Activated CD4-positive, alpha-beta memory T cell treated with anti-CD3 and anti-CD28 coated beads for 36 hours (primary cell): ENCODE measurements at regions of chr1 and their contacts with region 1.

Region 1: DNA sequence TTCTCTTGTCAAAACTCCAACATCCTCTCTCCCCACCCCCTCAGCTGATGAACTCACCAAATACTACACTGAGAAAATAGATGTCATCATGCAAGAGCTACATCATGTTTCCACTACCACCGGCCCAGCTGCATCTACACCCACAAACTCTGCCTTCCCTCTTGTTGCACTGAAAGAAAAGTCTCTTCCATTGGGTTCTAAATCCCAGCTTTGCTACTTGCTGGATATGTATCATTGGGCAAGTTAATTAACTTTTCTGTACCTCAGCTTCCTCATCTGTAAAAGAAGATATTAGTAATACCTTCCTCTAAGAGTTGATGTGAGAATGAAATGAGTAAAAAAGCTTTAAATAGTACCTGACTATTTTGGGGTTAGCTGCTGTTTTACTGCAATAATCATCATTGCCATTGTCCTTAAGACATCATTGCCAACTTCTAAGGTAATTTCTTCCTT is 108.6 kb downstream of the OLFML2B start:
- DNase-seq: peak; percentile 60
- H3K4me3 Mint-ChIP-seq: no peak overlapping the region
- H3K27ac Mint-ChIP-seq: no peak overlapping the region
- H3K4me1 Mint-ChIP-seq: peaks cover 22% of the 10 kb centered on the region
- H3K27me3 Mint-ChIP-seq: no peaks in the 10 kb centered on the region

Region 2: DNA sequence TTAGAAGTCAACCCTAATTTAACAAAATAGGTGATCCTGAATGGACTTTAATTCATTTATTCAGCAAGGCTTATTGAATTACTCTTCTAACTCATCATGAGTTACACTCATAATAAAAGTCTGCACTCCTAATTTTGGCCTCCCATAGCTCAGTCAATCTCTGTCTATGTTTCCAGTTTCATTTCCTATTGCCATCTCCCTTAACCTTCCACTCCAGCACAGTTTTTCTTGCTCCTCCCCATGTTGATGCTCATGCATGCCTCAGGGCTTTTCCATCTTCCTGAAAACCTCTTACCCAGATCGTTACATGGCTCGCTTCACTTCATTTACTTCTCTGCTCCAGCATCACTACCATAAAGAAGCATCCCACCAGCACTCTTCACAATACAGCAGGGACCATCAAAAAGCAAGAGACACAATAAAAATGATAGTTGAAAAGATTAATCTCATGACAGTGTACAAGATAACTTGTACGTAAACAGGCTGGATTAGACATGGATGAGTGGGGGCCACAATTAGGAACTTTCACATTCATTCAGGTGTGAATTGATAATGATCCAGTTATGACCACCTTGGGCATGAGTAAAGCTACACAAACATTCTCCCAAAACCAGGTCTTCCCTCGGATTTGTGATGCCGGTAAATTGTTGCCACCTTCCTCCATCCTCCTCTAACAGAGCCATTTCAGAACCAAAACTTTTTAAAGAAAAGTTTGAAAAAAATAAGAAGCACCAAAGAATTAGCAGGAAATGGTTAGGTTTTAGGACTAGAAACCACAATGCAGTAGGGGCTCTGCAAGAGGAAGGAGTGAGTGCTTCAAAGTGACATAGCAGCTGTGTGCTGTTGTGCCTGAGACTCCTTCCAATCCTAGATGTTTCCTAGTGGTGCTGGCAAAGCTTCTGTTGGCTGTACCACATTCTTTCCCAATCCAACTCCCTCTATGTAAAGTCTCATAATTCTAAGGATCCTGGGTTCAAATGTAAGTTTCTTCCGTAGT is 18.8 kb after region 1 on chr1:
- CTCF ChIA-PET with region 1: interaction called, 3 read pairs
- POLR2A ChIA-PET with region 1: no interaction called
- intact Hi-C with region 1: loop called (anchors 2 kb)
- DNase-seq: no peak
- H3K4me3 Mint-ChIP-seq: no peak overlapping the region
- H3K27ac Mint-ChIP-seq: peak overlapping the region; percentile 69
- H3K4me1 Mint-ChIP-seq: peaks cover 35% of the 10 kb centered on the region
- H3K27me3 Mint-ChIP-seq: no peaks in the 10 kb centered on the region

Region 3: DNA sequence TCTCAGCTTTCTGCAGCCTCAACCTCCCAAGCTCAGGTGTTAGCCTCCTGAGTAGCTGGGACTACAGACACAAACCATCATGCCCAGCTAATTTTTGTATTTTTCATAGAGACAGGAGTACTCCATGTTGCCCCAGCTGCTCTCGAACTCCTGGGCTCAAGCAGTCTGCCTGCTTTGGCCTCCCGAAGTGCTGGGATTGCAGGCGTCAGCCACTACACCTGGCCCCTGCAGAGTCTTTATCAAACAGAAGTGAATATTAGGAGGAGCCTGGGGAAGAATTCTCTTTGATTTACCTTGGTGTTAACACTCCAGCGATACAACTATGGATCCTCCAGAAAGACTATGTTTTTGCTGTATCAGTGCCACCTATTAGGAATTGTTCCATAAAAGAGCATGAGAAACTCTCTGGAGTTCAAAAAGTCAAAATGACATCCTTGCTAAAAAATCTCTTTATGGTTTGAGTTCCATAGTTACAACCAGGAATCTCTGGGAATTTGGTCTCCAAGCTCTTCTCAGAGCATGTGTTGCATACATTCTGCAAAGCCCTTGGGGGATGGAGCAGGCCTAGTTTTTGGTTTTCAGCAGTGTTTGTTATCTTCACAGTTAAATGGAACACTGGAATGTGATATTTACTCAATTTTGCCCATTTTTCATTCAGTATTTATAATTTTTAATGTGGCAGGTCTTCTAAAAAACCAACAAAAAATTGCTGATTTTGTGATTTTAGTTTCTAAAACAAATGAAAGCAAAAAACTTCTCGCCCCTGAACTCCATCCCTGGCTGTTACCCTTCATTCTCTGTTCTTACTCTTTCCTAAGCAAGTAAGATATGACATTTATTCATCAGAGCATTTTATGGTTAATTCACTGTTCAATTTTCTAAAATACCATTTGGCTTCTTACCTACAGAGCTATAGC is 31.3 kb after region 1 on chr1:
- CTCF ChIA-PET with region 1: no interaction called
- POLR2A ChIA-PET with region 1: no interaction called
- intact Hi-C with region 1: loop called (anchors 5 kb)
- DNase-seq: no peak
- H3K4me3 Mint-ChIP-seq: no peak overlapping the region
- H3K27ac Mint-ChIP-seq: no peak overlapping the region
- H3K4me1 Mint-ChIP-seq: peaks cover under 1% of the 10 kb centered on the region
- H3K27me3 Mint-ChIP-seq: no peaks in the 10 kb centered on the region

Region 4: GRCh38 chr1:161962091-161962887 is 47.2 kb after region 1 on chr1:
- CTCF ChIA-PET with region 1: no interaction called
- POLR2A ChIA-PET with region 1: no interaction called
- intact Hi-C with region 1: loop called (anchors 1 kb)
- DNase-seq: peak; percentile 67
- H3K4me3 Mint-ChIP-seq: peak overlapping the region; percentile 73
- H3K27ac Mint-ChIP-seq: peak overlapping the region; percentile 90
- H3K4me1 Mint-ChIP-seq: peaks cover 52% of the 10 kb centered on the region
- H3K27me3 Mint-ChIP-seq: no peaks in the 10 kb centered on the region

Region 5: GRCh38 chr1:162023547-162024501 is 108.7 kb after region 1 on chr1 and contains the start of gene OLFML2B:
- CTCF ChIA-PET with region 1: no interaction called
- POLR2A ChIA-PET with region 1: no interaction called
- intact Hi-C with region 1: loop called (anchors 5 kb)
- DNase-seq: peak; percentile 59
- H3K4me3 Mint-ChIP-seq: peak within 1 kb of the TSS; percentile 70
- H3K27ac Mint-ChIP-seq: no peak within 1 kb of the TSS
- H3K4me1 Mint-ChIP-seq: peaks cover 6% of the 10 kb centered on the region
- H3K27me3 Mint-ChIP-seq: peaks cover 34% of the 10 kb centered on the region
- total RNA-seq, gene OLFML2B: not detected